ENCODE measurements at regions of chr2 and their contacts with region 1.

Region 1: GRCh38 chr2:38947240-38948239 is 57.9 kb downstream of the ARHGEF33 start:
- DNase-seq: peak; percentile 71 to 81 (median 72)
- ATAC-seq: peak; percentile 96 to 98 (median 98)
- H3K4me3 ChIP-seq: no peak overlapping the region
- H3K27ac ChIP-seq: no peak overlapping the region
- H3K4me1 ChIP-seq: no peaks in the 10 kb centered on the region
- H3K27me3 ChIP-seq: no peaks in the 10 kb centered on the region
- CTCF ChIP-seq: peak; percentile 55 to 80 (median 69)
- POLR2A ChIP-seq: no peak

Region 2: GRCh38 chr2:38485734-38486133 is 461.8 kb before region 1 on chr2:
- intact Hi-C with region 1: no loop called
- DNase-seq: no peak
- ATAC-seq: peak in 2 of 4 donors; percentile 39 to 53
- H3K4me3 ChIP-seq: no peak overlapping the region
- H3K27ac ChIP-seq: no peak overlapping the region
- H3K4me1 ChIP-seq: no peaks in the 10 kb centered on the region
- H3K27me3 ChIP-seq: no peaks in the 10 kb centered on the region
- CTCF ChIP-seq: no peak
- POLR2A ChIP-seq: no peak

Region 3: GRCh38 chr2:39080152-39080551 is 132.6 kb after region 1 on chr2:
- intact Hi-C with region 1: no loop called
- DNase-seq: no peak
- ATAC-seq: no peak
- H3K4me3 ChIP-seq: no peak overlapping the region
- H3K27ac ChIP-seq: no peak overlapping the region
- H3K4me1 ChIP-seq: no peaks in the 10 kb centered on the region
- H3K27me3 ChIP-seq: no peaks in the 10 kb centered on the region
- CTCF ChIP-seq: no peak
- POLR2A ChIP-seq: no peak

Region 4: DNA sequence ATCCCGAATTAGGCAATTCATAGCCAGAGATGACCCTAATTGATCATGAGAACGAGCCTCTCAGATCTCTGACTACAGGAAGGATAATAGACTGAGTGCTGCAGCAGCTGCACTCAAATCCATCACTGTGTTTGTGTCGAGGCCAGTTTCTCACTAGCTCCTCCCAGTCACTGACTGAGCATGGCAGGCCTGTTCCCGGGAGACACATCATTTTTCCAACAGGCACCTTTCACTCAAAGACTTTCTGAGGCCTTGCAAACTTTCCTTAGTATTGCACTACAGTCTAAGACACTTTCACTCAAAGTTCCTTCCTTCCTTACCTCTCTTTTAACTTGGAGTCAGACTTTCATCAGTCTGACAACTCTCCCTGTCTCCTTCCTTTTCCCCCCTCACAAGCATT is 159.6 kb after region 1 on chr2:
- intact Hi-C with region 1: no loop called
- DNase-seq: no peak
- ATAC-seq: peak; percentile 38 to 50 (median 43)
- H3K4me3 ChIP-seq: no peak overlapping the region
- H3K27ac ChIP-seq: no peak overlapping the region
- H3K4me1 ChIP-seq: no peaks in the 10 kb centered on the region
- H3K27me3 ChIP-seq: no peaks in the 10 kb centered on the region
- CTCF ChIP-seq: no peak
- POLR2A ChIP-seq: no peak

Region 5: GRCh38 chr2:39234754-39235153 is 287.2 kb after region 1 on chr2:
- intact Hi-C with region 1: loop called in 1 of 2 experiments (anchors 10 kb)
- DNase-seq: no peak
- ATAC-seq: no peak
- H3K4me3 ChIP-seq: no peak overlapping the region
- H3K27ac ChIP-seq: no peak overlapping the region
- H3K4me1 ChIP-seq: no peaks in the 10 kb centered on the region
- H3K27me3 ChIP-seq: no peaks in the 10 kb centered on the region
- CTCF ChIP-seq: no peak
- POLR2A ChIP-seq: no peak

Measured in right lobe of liver (tissue), 6 donors.